ENCODE measurements at regions of chr11 and their contacts with region 1.

Region 1: DNA sequence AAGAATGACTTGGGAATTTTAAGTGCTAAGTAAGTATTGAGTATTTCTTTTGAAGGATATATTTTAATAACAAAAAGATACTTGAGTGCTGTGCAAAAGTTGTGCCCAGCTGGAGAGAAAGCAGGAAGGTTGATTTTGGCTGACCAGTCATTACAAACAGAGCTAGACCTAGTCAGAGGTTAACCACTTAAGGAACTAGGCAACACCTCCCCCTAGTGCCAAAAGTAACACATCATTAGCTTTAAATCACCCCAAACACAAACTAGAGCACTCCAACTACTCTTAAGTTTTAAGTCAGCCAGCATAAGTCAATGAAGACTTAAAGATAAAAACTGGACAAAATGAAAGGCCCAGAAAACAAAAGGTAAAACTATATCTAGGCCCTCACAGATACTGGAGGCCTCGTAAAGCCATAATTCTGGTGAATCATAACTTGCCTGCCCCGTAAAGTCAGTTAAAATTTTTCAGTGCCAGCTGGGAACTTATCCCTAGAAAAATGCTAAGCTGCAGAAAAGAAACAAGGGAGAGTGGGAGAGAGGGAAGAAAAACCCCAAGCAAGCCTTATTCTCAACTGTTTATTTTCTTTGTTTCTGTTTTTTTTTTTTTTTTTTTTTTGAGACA is 4.6 kb downstream of the TMEM9B start:
- DNase-seq: peak; percentile 68
- H3K4me3 ChIP-seq: no peak overlapping the region
- H3K27ac ChIP-seq: peak overlapping the region; percentile 39
- H3K27me3 ChIP-seq: no peaks in the 10 kb centered on the region
- CTCF ChIP-seq: peak; percentile 62

Region 2: GRCh38 chr11:8886322-8886721 is 73.3 kb before region 1 on chr11:
- CTCF ChIA-PET with region 1: no interaction called
- POLR2A ChIA-PET with region 1: no interaction called
- DNase-seq: no peak
- H3K4me3 ChIP-seq: no peak overlapping the region
- H3K27ac ChIP-seq: no peak overlapping the region
- H3K27me3 ChIP-seq: peaks cover 2% of the 10 kb centered on the region
- CTCF ChIP-seq: no peak

Region 3: DNA sequence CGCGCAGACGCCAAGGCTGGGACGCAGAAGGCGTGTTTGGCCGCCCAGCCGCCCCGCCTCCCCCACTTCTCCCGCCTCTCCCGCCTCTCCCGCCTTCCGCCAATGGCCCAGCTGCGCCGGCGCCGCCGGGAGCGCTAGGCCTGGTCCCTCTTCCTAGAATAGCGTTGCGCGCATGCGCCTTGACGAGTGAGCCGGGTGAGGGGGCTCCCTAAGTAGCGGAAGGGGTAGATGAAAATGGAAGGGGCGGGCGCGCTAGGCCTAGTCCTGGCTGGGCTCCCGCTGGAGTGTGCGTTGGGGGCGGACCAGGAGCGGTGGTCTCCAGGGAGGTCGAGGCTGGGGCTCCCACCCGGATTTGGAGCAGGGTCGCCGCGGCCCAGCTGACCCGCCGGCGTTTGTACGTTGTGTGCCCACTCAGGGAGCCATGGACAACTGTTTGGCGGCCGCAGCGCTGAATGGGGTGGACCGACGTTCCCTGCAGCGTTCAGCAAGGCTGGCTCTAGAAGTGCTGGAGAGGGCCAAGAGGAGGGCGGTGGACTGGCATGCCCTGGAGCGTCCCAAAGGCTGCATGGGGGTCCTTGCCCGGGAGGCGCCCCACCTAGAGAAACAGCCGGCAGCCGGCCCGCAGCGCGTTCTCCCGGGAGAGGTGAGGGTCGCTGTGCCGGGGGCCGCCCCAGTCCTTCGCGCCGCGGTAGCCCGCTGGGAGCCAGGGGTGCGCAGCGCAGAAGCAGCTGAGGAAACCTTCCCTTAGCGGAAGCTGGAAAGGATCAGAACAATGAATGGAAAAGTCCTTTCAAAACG is 48.4 kb before region 1 on chr11 and contains the start of gene AKIP1:
- CTCF ChIA-PET with region 1: interaction called, 33 read pairs
- POLR2A ChIA-PET with region 1: interaction called, 3 read pairs
- DNase-seq: peak; percentile 87
- H3K4me3 ChIP-seq: peak within 1 kb of the TSS; percentile 89
- H3K27ac ChIP-seq: peak within 1 kb of the TSS; percentile 83
- H3K27me3 ChIP-seq: no peaks in the 10 kb centered on the region
- CTCF ChIP-seq: no peak
- polyA plus RNA-seq, gene AKIP1: 39.6 and 41.4 TPM in 2 replicates

Region 4: GRCh38 chr11:8948886-8949285 is 10.8 kb before region 1 on chr11:
- CTCF ChIA-PET with region 1: interaction called, 22 read pairs
- POLR2A ChIA-PET with region 1: no interaction called
- DNase-seq: no peak
- H3K4me3 ChIP-seq: no peak overlapping the region
- H3K27ac ChIP-seq: no peak overlapping the region
- H3K27me3 ChIP-seq: no peaks in the 10 kb centered on the region
- CTCF ChIP-seq: no peak

Measured in AG04450 (cell line).